Sciatic nerve (tissue), 2 donors: ENCODE measurements at regions of chr7 and their contacts with region 1.

Region 1: DNA sequence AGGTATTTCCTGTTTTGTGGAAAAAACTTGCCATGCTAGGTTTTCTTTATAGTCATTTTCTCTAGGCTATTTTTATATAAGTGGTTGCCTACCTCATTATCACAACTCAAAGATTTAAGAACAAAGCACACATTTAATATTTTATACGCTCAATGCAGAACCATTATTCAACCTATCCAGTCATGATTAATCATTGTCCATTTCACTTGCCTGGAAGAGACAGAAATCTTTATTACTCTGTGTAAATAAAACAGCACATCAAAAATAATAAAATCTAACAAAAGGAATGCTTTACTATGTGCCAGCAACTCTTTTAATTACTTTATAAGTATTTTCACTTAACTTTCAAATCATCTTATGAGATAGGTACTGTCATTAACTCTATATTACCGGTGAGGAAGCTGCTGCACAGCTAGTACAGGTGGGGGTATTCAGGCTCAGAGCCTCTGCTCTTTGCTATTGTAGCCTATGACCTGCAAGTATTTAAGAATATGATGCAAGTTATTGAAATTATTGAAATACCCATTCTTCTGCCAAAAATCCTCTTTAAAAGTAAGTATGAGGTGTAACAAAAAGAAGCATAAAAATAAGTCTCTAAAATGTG is 16.4 kb upstream of the TAS2R16 start:
- DNase-seq: no peak
- ATAC-seq: no peak

Region 2: GRCh38 chr7:123034106-123034505 is 22.2 kb after region 1 on chr7:
- intact Hi-C with region 1: loop called (anchors 2 kb)
- DNase-seq: no peak
- ATAC-seq: no peak